ENCODE measurements at regions of chr7 and their contacts with region 1.

Region 1: GRCh38 chr7:51141451-51142003 is 175.1 kb downstream of the COBL start:
- DNase-seq: no peak
- H3K4me3 Mint-ChIP-seq: no peak overlapping the region
- H3K27ac Mint-ChIP-seq: no peak overlapping the region
- H3K4me1 Mint-ChIP-seq: peaks cover 15% of the 10 kb centered on the region
- H3K27me3 Mint-ChIP-seq: peaks cover 6% of the 10 kb centered on the region

Region 2: DNA sequence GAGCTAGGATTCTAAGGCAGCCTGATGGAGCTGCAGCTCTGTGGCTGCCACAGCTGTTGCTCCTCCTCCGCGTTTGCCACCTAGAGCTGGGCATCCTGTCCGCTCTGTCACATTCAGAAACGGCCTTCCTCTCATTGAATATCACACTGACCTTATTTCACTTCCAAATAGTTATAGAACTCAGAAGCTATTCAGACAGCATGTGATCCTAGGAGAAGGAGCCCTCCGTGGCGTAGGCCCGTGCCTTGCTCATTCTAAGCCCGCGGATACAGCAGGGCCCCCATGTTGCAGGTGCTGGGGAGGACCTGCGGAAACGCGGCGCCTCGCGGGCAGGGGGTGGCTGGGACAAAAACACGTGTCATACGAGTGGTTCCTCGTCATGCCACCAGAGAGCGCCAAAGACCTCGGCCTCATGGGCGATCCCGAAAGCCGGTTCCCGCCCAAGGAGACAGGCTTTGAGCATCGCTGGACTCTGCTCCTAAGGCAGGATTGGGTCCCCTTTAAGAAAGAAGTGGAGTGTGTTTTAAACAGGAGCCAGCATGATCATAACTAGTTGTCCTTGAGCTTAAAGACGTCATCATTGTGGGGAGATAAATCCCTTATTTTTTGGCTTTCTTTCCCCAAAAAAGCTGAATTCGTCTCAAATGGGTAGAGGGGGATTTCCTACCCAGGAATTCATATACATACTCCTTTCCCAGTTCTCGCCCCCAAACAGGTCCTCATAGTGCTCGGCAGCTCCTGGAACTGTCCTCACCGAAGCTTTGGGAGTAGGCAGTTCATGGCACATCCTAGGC is 673.5 kb before region 1 on chr7:
- intact Hi-C with region 1: loop called (anchors 1 kb)
- DNase-seq: peak; percentile 69
- H3K4me3 Mint-ChIP-seq: no peak overlapping the region
- H3K27ac Mint-ChIP-seq: no peak overlapping the region
- H3K4me1 Mint-ChIP-seq: peaks cover 12% of the 10 kb centered on the region
- H3K27me3 Mint-ChIP-seq: peaks cover 12% of the 10 kb centered on the region

Region 3: DNA sequence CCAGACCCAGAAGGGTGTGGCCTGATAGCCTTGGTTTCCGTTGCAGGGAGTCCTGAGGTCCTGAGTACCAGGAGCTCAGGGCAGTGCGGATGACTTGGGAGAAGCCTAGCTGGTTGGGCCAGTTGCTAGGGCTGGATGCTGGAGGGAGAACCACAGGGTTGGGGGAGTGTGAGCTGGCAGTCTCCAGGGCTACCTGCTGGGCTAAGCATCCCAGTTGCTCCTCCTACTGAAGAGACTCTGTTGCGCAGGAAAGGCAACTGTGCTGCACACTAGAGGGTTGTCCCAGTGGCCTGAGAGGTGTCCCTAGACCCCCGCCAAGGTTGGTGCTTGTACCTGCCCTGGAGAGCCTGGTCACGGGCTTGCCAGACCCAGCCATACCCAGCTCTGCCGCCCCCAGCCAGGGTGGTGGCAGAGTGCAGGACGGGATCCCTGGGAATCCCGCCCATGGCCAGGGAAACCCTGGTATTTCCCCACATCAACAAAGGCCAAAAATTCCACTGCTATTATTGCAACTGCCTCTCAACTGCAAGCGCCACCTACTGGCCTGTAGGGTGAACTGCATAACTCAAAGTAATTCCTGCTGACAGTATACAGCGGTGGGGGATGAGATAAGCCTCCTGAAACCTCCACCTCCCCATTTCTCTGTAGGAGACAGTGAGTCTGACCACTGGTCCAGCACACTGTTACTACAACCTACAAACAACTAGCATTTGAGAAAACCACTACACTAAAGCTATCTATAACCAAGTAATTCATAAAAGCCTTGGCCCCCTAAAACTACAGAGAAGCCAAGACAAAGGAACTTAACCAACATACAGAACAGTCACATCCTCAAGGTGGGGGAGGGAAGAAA is 508.7 kb before region 1 on chr7:
- intact Hi-C with region 1: loop called (anchors 1 kb)
- DNase-seq: peak; percentile 24
- H3K4me3 Mint-ChIP-seq: no peak overlapping the region
- H3K27ac Mint-ChIP-seq: no peak overlapping the region
- H3K4me1 Mint-ChIP-seq: peaks cover 4% of the 10 kb centered on the region
- H3K27me3 Mint-ChIP-seq: peaks cover 17% of the 10 kb centered on the region

Region 4: GRCh38 chr7:50679218-50680007 is 462.1 kb before region 1 on chr7:
- intact Hi-C with region 1: loop called (anchors 5 kb)
- DNase-seq: no peak
- H3K4me3 Mint-ChIP-seq: no peak overlapping the region
- H3K27ac Mint-ChIP-seq: no peak overlapping the region
- H3K4me1 Mint-ChIP-seq: no peaks in the 10 kb centered on the region
- H3K27me3 Mint-ChIP-seq: peaks cover 11% of the 10 kb centered on the region

Region 5: GRCh38 chr7:50696810-50697582 is 444.5 kb before region 1 on chr7:
- intact Hi-C with region 1: loop called (anchors 1 kb)
- DNase-seq: no peak
- H3K4me3 Mint-ChIP-seq: no peak overlapping the region
- H3K27ac Mint-ChIP-seq: no peak overlapping the region
- H3K4me1 Mint-ChIP-seq: peaks cover 4% of the 10 kb centered on the region
- H3K27me3 Mint-ChIP-seq: peaks cover 5% of the 10 kb centered on the region

Region 6: GRCh38 chr7:51067757-51068156 is 73.8 kb before region 1 on chr7:
- intact Hi-C with region 1: loop called (anchors 2 kb)
- DNase-seq: peak; percentile 17
- H3K4me3 Mint-ChIP-seq: no peak overlapping the region
- H3K27ac Mint-ChIP-seq: no peak overlapping the region
- H3K4me1 Mint-ChIP-seq: no peaks in the 10 kb centered on the region
- H3K27me3 Mint-ChIP-seq: peaks cover 5% of the 10 kb centered on the region